ENCODE measurements at regions of chr1 and their contacts with region 1.

Region 1: GRCh38 chr1:45375104-45376090 is 35.2 kb upstream of the MUTYH start:
- DNase-seq: no peak
- ATAC-seq: peak; percentile 43
- H3K4me3 ChIP-seq: no peak overlapping the region
- H3K27ac ChIP-seq: peak overlapping the region; percentile 37; the same call in 1 of the 2 replicates
- H3K4me1 ChIP-seq: peaks cover 48% of the 10 kb centered on the region
- H3K27me3 ChIP-seq: no peaks in the 10 kb centered on the region
- CTCF ChIP-seq: no peak
- EP300 ChIP-seq: no peak
- POLR2A ChIP-seq: no peak
- RAD21 ChIP-seq: no peak

Region 2: GRCh38 chr1:45282351-45282750 is 93.0 kb before region 1 on chr1:
- CTCF ChIA-PET with region 1: no interaction called
- POLR2A ChIA-PET with region 1: no interaction called
- RAD21 ChIA-PET with region 1: no interaction called
- SMC1A ChIA-PET with region 1: no interaction called
- in situ Hi-C with region 1: no loop called
- intact Hi-C with region 1: no loop called
- DNase-seq: no peak
- ATAC-seq: no peak
- H3K4me3 ChIP-seq: no peak overlapping the region
- H3K27ac ChIP-seq: no peak overlapping the region
- H3K4me1 ChIP-seq: no peaks in the 10 kb centered on the region
- H3K27me3 ChIP-seq: no peaks in the 10 kb centered on the region
- CTCF ChIP-seq: no peak
- EP300 ChIP-seq: no peak
- POLR2A ChIP-seq: no peak
- RAD21 ChIP-seq: no peak

Region 3: GRCh38 chr1:45359882-45360513 is 15.4 kb before region 1 on chr1:
- CTCF ChIA-PET with region 1: interaction called, 21 read pairs
- POLR2A ChIA-PET with region 1: interaction called, 4 read pairs
- RAD21 ChIA-PET with region 1: interaction called, 8 read pairs
- SMC1A ChIA-PET with region 1: interaction called, 7 read pairs
- in situ Hi-C with region 1: no loop called
- intact Hi-C with region 1: no loop called
- DNase-seq: no peak
- ATAC-seq: peak; percentile 81
- H3K4me3 ChIP-seq: no peak overlapping the region
- H3K27ac ChIP-seq: no peak overlapping the region
- H3K4me1 ChIP-seq: peaks cover 9% of the 10 kb centered on the region
- H3K27me3 ChIP-seq: no peaks in the 10 kb centered on the region
- CTCF ChIP-seq: peak; percentile 49 to 78 (median 59); a peak in 5 of 6 replicates
- EP300 ChIP-seq: no peak
- POLR2A ChIP-seq: no peak
- RAD21 ChIP-seq: peak; percentile 97

Region 4: GRCh38 chr1:45365051-45365450 is 10.3 kb before region 1 on chr1:
- CTCF ChIA-PET with region 1: interaction called, 21 read pairs
- POLR2A ChIA-PET with region 1: interaction called, 4 read pairs
- RAD21 ChIA-PET with region 1: interaction called, 4 read pairs
- SMC1A ChIA-PET with region 1: interaction called, 7 read pairs
- in situ Hi-C with region 1: no loop called
- intact Hi-C with region 1: no loop called
- DNase-seq: no peak
- ATAC-seq: peak; percentile 96
- H3K4me3 ChIP-seq: no peak overlapping the region
- H3K27ac ChIP-seq: no peak overlapping the region
- H3K4me1 ChIP-seq: peaks cover 11% of the 10 kb centered on the region
- H3K27me3 ChIP-seq: no peaks in the 10 kb centered on the region
- CTCF ChIP-seq: no peak
- EP300 ChIP-seq: 0 out of 4 replicates have a peak, but pooled peaks of 1 of the 2 experiments have one; percentile 44
- POLR2A ChIP-seq: no peak
- RAD21 ChIP-seq: no peak

Region 5: DNA sequence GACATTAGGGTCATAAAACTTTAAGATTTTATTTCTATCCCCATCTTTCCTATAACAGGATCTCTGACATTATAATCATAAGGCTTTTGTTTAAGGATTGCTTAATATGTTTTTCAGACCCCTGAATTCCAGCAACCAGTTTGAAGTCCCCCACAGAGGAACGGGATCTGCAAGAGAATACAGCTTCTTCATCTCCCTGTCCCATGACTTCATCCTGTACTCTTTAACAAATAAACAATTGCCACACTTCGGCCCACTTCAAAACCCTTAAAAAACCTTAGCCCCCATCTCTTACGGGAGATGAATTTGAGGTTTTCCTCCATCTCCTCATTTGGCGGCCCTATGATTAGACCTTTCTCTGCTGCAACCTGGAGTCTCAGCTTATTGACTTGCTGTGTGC is 79.8 kb after region 1 on chr1:
- CTCF ChIA-PET with region 1: no interaction called
- POLR2A ChIA-PET with region 1: no interaction called
- RAD21 ChIA-PET with region 1: no interaction called
- SMC1A ChIA-PET with region 1: no interaction called
- in situ Hi-C with region 1: no loop called
- intact Hi-C with region 1: no loop called
- DNase-seq: no peak
- ATAC-seq: no peak
- H3K4me3 ChIP-seq: no peak overlapping the region
- H3K27ac ChIP-seq: no peak overlapping the region
- H3K4me1 ChIP-seq: peaks cover 4% of the 10 kb centered on the region; the same call in 1 of the 2 replicates
- H3K27me3 ChIP-seq: no peaks in the 10 kb centered on the region
- CTCF ChIP-seq: no peak
- EP300 ChIP-seq: no peak
- POLR2A ChIP-seq: no peak
- RAD21 ChIP-seq: no peak

Measured in GM12878 (cell line).